Mammary epithelial cell (primary cell): ENCODE measurements at regions of chr20 and their contacts with region 1.

Region 1: GRCh38 chr20:6024768-6025167 is 29.1 kb downstream of the LRRN4 start:
- DNase-seq: no peak
- H3K4me3 ChIP-seq: no peak overlapping the region
- H3K27ac ChIP-seq: no peak overlapping the region
- H3K4me1 ChIP-seq: no peaks in the 10 kb centered on the region
- H3K27me3 ChIP-seq: no peaks in the 10 kb centered on the region
- CTCF ChIP-seq: no peak

Region 2: GRCh38 chr20:6058684-6059295 is 34.0 kb after region 1 on chr20:
- CTCF ChIA-PET with region 1: interaction called, 7 read pairs
- dilution Hi-C with region 1: loop called (anchors 5 kb)
- in situ Hi-C with region 1: no loop called
- intact Hi-C with region 1: no loop called
- DNase-seq: no peak
- H3K4me3 ChIP-seq: no peak overlapping the region
- H3K27ac ChIP-seq: no peak overlapping the region
- H3K4me1 ChIP-seq: peaks cover 7% of the 10 kb centered on the region
- H3K27me3 ChIP-seq: no peaks in the 10 kb centered on the region
- CTCF ChIP-seq: no peak

Region 3: GRCh38 chr20:6480328-6481200 is 455.8 kb after region 1 on chr20:
- CTCF ChIA-PET with region 1: no interaction called
- dilution Hi-C with region 1: no loop called
- in situ Hi-C with region 1: no loop called
- intact Hi-C with region 1: no loop called
- DNase-seq: no peak
- H3K4me3 ChIP-seq: no peak overlapping the region
- H3K27ac ChIP-seq: no peak overlapping the region
- H3K4me1 ChIP-seq: no peaks in the 10 kb centered on the region
- H3K27me3 ChIP-seq: no peaks in the 10 kb centered on the region
- CTCF ChIP-seq: no peak